ENCODE measurements at regions of chr17 and their contacts with region 1.

Region 1: GRCh38 chr17:28951991-28952975 is 965 bp upstream of the PHF12 start:
- DNase-seq: peak; percentile 99
- H3K4me3 ChIP-seq: peak overlapping the region; percentile 61 to 67
- H3K27ac ChIP-seq: peak overlapping the region; percentile 86 to 98
- H3K4me1 ChIP-seq: peaks cover 0 to 25% (median 17%) of the 10 kb centered on the region in 4 donors
- H3K27me3 ChIP-seq: no peaks in the 10 kb centered on the region
- CTCF ChIP-seq: peak in 1 of 2 experiments; percentile 6

Region 2: DNA sequence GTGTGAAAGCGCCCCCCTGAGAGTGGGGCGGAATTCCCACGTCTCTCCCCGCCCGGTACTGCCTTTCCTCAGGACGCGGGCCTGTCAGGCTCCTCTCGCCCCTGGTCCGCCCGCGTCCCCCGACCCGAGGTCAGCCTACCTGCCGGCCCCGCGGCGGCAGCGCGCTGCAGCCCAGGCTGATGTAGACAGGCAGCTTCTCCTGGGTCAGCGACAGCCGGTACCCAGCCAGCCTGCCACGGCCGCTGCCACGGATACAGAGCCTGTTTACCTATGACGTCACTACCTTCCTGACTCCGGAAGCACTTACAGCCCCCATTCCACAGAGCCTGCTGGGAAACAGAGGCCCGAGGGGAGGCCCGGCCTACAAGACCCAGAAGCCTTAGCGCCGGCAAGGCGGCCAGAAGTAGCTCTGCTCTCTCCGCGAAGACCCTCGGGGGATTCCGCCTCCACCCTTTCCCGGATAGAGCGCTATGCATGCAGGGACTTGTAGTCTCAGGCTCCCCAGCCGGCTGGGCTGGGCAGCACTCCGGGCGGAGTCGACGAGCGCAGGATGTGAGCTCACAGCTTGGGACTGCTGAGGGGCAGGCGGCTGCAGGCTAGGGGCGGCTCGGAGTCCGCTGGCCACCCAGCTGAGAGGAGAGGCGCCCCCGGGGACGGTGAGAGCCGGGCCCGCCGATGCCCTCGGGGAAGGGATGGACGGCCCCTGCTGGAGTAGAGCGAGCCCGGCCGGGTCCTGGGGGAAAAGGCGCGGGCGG is 616.9 kb before region 1 on chr17 and contains the starts of genes IFT20 and TNFAIP1:
- intact Hi-C with region 1: loop called (anchors 5 kb)
- DNase-seq: peak; percentile 99 to 100
- H3K4me3 ChIP-seq: peak within 1 kb of the TSS; percentile 68 to 89
- H3K27ac ChIP-seq: peak within 1 kb of the TSS; percentile 92 to 94
- H3K4me1 ChIP-seq: peaks cover 0 to 48% (median 41%) of the 10 kb centered on the region in 4 donors
- H3K27me3 ChIP-seq: no peaks in the 10 kb centered on the region
- CTCF ChIP-seq: peak in 1 of 2 experiments; percentile 8

Region 3: GRCh38 chr17:29102741-29103181 is 150.5 kb after region 1 on chr17:
- intact Hi-C with region 1: no loop called
- DNase-seq: no peak
- H3K4me3 ChIP-seq: no peak overlapping the region
- H3K27ac ChIP-seq: no peak overlapping the region
- H3K4me1 ChIP-seq: no peaks in the 10 kb centered on the region
- H3K27me3 ChIP-seq: no peaks in the 10 kb centered on the region
- CTCF ChIP-seq: no peak